A673 (cell line): ENCODE measurements at regions of chr21 and their contacts with region 1.

Region 1: DNA sequence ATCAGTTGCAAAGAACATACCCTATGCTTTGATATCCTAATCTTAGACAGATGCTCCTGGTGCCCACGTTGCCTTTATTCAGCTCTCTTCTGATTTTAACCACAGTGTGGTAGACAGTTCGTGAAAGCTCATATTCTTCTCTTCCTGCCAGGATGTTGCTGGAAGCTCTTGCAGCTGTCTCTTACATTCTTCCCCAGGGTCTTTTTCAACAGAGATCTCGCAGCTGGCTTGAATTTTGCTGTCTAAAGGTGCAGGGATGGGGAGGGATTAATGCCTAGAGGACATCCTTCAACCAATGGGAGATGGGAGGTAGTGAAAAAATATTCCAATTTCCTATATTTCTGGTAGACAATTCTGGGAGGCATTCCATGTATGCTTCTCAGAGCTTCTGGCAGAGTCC is 150.0 kb upstream of the APP start:
- DNase-seq: no peak
- H3K4me3 ChIP-seq: no peak overlapping the region
- H3K27ac ChIP-seq: no peak overlapping the region
- H3K4me1 ChIP-seq: no peaks in the 10 kb centered on the region
- H3K27me3 ChIP-seq: no peaks in the 10 kb centered on the region
- CTCF ChIP-seq: no peak

Region 2: DNA sequence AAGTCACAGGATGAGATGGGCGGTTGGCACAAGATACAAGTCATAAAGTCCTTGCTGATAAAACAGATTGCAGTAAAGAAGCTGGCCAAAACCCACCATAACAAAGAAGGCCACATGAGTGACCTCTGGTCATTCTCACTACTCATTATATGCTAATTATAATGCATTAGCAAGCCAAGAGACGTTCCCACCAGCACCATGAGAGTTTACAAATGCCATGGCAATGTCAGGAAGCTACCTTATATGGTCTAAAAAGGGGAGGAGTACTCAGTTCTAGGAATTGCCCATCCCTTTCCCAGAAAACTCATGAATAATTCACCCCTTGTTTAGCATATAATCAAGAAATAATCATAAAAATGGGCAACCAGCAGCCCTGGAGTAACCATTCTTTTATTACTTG is 75.2 kb before region 1 on chr21:
- CTCF ChIA-PET with region 1: no interaction called
- POLR2A ChIA-PET with region 1: no interaction called
- intact Hi-C with region 1: loop called (anchors 10 kb)
- DNase-seq: no peak
- H3K4me3 ChIP-seq: no peak overlapping the region
- H3K27ac ChIP-seq: no peak overlapping the region
- H3K4me1 ChIP-seq: no peaks in the 10 kb centered on the region
- H3K27me3 ChIP-seq: no peaks in the 10 kb centered on the region
- CTCF ChIP-seq: no peak

Region 3: DNA sequence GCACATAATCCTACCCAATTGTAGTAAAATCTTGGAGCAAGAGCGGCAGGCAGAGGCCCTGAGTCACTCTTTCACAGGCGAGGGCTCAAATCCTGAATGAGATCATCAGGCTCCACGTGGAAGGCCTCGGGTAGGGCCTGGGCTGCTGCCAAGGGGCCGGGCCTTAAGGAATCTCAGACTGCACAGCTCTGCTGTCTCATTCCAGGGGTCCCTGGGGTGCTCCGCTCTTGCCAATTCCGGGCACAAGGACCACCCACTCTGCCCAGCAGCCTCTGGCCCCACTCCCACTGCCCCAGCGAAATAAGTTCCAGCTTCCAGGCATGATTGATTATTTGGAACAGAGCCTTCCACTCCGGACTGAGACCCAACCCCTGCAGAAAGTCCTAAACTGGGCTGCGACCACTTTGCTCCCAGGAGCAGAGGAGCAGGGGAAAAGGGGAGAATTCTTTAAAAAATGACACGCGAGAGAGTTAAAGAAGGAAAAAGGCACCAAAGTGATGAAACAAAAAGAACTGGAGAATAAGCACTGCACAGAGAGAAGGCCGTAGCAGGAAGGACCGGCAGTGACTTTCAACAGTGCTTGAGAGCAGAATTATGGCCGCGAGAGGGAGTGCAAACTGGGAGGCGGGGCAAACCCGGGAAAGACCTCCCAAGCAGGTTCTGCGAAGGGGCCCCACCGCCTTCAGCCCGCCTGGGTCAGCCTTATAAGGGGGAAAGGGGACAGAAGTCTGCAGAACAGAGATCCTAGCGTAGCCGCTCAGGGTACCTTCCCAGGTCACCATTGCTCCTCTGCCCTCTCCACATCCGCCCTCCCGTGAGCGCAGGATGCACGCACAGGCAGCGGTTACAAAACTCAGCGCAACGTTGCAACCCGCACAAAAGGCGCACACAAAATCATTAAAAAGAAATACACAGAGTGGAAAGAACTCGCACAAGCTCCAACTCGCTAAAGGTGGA is 522.7 kb after region 1 on chr21:
- CTCF ChIA-PET with region 1: no interaction called
- POLR2A ChIA-PET with region 1: no interaction called
- intact Hi-C with region 1: no loop called
- DNase-seq: peak; percentile 97
- H3K4me3 ChIP-seq: peak overlapping the region; percentile 69
- H3K27ac ChIP-seq: peak overlapping the region; percentile 90
- H3K4me1 ChIP-seq: peaks cover 18% of the 10 kb centered on the region
- H3K27me3 ChIP-seq: no peaks in the 10 kb centered on the region
- CTCF ChIP-seq: peak; percentile 56